ENCODE measurements at regions of chr17 and their contacts with region 1.

Region 1: GRCh38 chr17:76557368-76558197 is 17.7 kb downstream of the PRCD start:
- DNase-seq: peak; percentile 89 to 97
- H3K4me3 ChIP-seq: peak overlapping the region; percentile 89 to 100 (median 97)
- H3K27ac ChIP-seq: peak overlapping the region; percentile 93
- H3K4me1 ChIP-seq: peaks cover 2 to 10% (median 5%) of the 10 kb centered on the region in 4 experiments; a peak in 6 of 7 replicates
- H3K27me3 ChIP-seq: no peaks in the 10 kb centered on the region
- CTCF ChIP-seq: peak; percentile 63 to 81 (median 65)
- EP300 ChIP-seq: no peak
- POLR2A ChIP-seq: peak; percentile 86 to 95
- RAD21 ChIP-seq: peak; percentile 30 to 34; a peak in 3 of 4 replicates

Region 2: DNA sequence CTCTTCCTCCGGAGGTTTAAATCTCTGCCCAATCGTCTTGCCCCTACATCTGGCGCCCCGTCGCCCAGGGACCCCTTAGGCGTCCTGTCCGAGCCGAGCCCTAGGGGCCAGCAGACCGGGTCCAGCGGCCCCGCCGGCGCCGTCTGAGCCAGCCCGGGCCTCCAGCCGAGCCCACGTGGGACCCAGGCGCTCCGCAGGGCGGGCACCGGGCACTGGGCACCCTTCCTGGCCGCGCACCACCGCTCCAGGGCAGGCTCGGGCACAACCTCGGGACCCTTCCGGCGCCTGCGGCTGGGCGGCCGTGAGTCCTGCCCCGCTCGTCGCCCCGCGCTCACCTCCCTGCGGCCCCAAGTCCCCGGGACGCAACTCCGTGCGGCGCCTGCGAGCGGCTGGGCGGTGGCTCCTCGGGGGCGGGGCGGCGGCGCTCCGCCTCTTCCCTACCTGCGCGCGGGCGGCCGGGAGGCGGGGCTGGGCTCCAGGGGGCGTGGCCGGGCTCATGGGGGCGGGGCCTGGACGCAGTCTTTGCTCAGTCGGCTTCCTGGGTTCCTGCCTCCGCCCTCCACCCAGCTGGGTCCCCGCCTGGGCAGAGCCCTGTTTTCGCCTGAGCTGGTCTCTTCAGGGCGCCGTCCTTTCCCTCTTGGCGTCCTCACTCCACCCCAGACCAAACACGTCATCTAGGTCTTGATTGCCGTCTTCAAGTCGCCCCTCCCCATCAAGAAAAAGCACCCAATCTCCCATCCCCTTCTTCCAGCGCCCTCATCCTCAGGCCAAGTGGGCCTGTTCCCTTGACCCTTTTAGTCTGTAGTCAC is 56.4 kb before region 1 on chr17 and contains the start of gene RHBDF2:
- CTCF ChIA-PET with region 1: interaction called, 5 read pairs
- POLR2A ChIA-PET with region 1: interaction called, 15 read pairs
- DNase-seq: peak; percentile 65 to 100
- H3K4me3 ChIP-seq: peak within 1 kb of the TSS; percentile 62 to 82 (median 76)
- H3K27ac ChIP-seq: no peak within 1 kb of the TSS
- H3K4me1 ChIP-seq: peaks cover 11 to 43% (median 34%) of the 10 kb centered on the region in 4 experiments
- H3K27me3 ChIP-seq: no peaks in the 10 kb centered on the region
- CTCF ChIP-seq: no peak
- EP300 ChIP-seq: no peak
- POLR2A ChIP-seq: peak in 1 of 2 experiments; percentile 71; a peak in 2 of 3 replicates
- RAD21 ChIP-seq: no peak
- total RNA-seq, gene RHBDF2: 25.9 and 26.2 TPM in 2 replicates

Region 3: DNA sequence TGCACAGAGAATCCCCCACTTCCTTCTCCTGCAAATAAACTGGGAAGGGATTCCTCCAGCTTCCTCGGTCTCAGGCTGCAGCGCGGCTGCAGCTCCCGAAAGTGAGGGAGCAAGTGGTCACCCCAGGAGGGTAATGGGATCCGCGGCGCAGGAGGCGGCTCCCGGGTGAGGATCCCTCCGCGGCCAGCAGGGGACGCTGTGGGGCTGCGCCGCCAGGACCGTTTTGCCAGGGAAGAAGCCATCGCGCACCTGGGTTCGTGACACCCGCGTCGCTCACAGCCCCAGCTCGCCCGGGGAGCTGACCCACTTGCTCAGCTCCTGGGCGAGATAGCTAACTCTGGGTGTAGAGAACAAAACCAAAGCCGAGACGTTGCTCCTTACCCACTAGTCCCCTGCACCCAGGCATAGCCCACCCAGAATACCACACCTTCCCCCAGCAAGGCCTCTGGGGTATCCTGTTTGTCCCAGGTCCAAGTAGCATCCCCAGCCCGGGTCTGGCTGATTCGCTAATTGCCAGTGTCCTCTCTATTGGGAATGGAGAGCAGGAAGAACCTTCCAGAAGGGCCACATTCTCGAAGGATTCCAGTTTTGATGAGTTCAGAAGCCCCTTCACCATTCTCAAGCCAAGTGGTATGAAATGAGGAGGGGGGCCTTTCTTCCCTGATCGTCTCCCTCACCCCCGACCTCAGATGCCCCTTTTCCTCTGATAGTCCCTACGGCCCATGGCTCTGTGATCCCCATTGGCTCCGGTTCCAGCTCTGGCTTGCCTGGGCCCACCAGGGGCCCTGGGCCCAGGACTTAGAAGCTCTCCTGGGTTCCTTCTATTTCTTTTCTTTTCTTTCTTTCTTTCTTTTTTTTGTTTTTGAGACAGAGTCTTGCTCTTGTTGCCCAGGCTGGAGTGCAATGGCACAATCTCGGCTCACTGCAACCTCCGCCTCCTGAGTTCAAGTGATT is 34.2 kb before region 1 on chr17:
- CTCF ChIA-PET with region 1: interaction called, 46 read pairs
- POLR2A ChIA-PET with region 1: interaction called, 42 read pairs
- DNase-seq: peak; percentile 49 to 96
- H3K4me3 ChIP-seq: no peak overlapping the region
- H3K27ac ChIP-seq: no peak overlapping the region
- H3K4me1 ChIP-seq: peaks cover 0 to 19% (median 10%) of the 10 kb centered on the region in 4 experiments; a peak in 6 of 7 replicates
- H3K27me3 ChIP-seq: peaks cover 0 to 5% (median 0%) of the 10 kb centered on the region in 4 experiments; a peak in 3 of 7 replicates
- CTCF ChIP-seq: peak; percentile 97 to 99 (median 99)
- EP300 ChIP-seq: peak in 1 of 2 experiments; percentile 43; a peak in 1 of 3 replicates
- POLR2A ChIP-seq: no peak
- RAD21 ChIP-seq: peak; percentile 91 to 92

Region 4: DNA sequence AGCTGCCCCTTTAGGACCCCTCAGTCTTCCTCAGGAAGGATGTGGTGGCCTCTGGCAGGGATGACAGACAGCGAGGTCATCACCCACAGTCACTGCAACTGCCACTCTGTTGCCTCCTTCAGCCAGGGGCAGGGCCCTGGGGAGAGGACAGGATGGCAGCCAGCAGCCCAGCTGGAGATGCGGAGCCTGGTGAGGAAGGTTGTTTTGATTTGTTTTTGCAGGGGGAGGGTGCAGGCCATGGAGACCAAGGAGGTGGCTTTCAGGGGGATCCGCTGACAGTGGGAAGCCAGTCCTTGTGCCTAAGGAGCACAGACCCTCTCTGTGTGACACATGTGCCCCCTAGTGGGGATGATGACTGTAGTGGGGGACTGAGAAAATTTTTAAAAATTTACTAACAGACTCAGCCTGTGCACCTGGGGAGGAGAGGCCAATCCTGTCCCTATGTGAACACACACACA is 10.4 kb before region 1 on chr17:
- CTCF ChIA-PET with region 1: interaction called, 48 read pairs
- POLR2A ChIA-PET with region 1: interaction called, 38 read pairs
- DNase-seq: no peak
- H3K4me3 ChIP-seq: no peak overlapping the region
- H3K27ac ChIP-seq: no peak overlapping the region
- H3K4me1 ChIP-seq: peaks cover 4 to 30% (median 10%) of the 10 kb centered on the region in 4 experiments; a peak in 6 of 7 replicates
- H3K27me3 ChIP-seq: no peaks in the 10 kb centered on the region; a peak in 1 of 7 replicates
- CTCF ChIP-seq: peak; percentile 63 to 82 (median 65)
- EP300 ChIP-seq: no peak
- POLR2A ChIP-seq: no peak
- RAD21 ChIP-seq: peak; percentile 83 to 89

Region 5: DNA sequence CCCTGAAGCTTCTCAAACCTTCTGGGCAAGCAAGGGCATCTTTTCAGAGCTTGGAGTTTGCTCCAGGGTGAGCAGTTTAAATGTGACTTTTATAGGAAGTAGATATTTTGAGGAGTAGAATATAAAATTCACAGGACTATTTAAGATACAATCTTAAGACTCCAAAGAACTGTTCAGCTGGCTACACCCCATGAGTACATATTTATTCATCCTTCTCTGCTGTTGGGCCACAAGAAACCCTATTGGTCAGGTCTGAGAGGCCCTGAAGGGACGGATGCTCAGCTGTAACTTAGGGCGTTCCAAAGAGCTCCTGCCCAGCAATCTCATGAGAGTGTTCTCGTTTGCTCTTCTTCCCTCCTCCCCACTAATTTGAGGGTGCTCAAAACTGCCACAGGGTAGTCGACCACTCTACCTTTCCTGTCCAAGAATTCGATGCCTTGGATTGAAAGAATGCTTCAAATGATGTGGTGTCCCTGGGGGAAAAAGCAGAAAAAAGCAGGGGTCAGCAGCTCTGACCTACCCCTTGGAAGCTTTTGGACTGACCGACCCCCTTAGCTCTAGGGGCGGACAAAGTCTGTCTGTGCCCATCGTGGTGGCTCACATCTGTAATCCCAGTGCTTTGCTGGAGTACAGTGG is 20.9 kb after region 1 on chr17:
- CTCF ChIA-PET with region 1: interaction called, 71 read pairs
- POLR2A ChIA-PET with region 1: interaction called, 40 read pairs
- DNase-seq: no peak
- H3K4me3 ChIP-seq: no peak overlapping the region
- H3K27ac ChIP-seq: no peak overlapping the region
- H3K4me1 ChIP-seq: peaks cover 0 to 9% (median 4%) of the 10 kb centered on the region in 4 experiments; a peak in 5 of 7 replicates
- H3K27me3 ChIP-seq: peaks cover 0 to 31% (median 25%) of the 10 kb centered on the region in 4 experiments; a peak in 6 of 7 replicates
- CTCF ChIP-seq: no peak
- EP300 ChIP-seq: no peak
- POLR2A ChIP-seq: no peak
- RAD21 ChIP-seq: no peak

Region 6: DNA sequence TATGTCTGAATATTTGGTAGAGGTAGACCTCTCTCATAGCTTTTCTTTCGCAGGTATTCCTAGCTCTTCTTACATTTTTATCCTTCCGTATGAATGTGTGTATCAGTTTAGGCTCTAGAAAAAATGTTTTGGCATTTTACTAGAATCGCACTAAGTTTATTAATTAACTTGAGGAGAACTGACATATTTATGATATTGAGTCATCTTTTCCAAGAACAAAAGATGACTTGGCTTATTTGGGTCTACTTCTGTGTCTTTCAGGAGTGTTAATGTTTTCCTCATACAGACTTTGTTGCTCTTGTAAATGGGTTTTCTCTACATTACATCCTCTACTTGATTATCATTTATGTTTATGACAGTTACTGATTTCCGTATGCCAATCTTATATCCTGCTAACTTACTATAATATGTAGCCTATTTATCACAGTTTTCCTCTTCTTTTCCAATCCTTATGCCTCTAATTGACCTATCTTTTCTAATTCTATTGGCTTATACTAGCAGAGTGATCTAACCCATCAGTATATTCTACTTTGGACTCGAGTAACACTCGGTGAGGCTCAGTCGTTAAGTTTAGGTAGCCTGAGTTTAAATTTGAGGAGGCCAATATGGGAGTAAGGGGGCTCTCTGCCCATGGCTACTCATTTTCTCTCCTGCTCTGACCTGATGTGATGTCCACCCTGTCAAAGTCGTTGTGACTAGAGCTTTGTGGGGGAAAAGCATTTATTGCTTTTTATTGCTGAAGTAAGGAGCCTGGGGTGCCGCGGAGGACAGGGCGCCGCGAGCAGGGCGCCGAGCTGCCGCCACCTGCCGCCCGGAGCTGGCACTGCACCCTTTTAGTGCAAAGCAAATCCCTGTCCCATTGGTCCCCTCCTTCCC is 65.9 kb after region 1 on chr17:
- CTCF ChIA-PET with region 1: interaction called, 20 read pairs
- POLR2A ChIA-PET with region 1: interaction called, 3 read pairs
- DNase-seq: peak in 1 of 2 experiments; percentile 93
- H3K4me3 ChIP-seq: no peak overlapping the region
- H3K27ac ChIP-seq: no peak overlapping the region
- H3K4me1 ChIP-seq: no peaks in the 10 kb centered on the region
- H3K27me3 ChIP-seq: no peaks in the 10 kb centered on the region; a peak in 2 of 7 replicates
- CTCF ChIP-seq: peak; percentile 81 to 94 (median 85)
- EP300 ChIP-seq: no peak
- POLR2A ChIP-seq: no peak
- RAD21 ChIP-seq: peak; percentile 83 to 85

Region 7: DNA sequence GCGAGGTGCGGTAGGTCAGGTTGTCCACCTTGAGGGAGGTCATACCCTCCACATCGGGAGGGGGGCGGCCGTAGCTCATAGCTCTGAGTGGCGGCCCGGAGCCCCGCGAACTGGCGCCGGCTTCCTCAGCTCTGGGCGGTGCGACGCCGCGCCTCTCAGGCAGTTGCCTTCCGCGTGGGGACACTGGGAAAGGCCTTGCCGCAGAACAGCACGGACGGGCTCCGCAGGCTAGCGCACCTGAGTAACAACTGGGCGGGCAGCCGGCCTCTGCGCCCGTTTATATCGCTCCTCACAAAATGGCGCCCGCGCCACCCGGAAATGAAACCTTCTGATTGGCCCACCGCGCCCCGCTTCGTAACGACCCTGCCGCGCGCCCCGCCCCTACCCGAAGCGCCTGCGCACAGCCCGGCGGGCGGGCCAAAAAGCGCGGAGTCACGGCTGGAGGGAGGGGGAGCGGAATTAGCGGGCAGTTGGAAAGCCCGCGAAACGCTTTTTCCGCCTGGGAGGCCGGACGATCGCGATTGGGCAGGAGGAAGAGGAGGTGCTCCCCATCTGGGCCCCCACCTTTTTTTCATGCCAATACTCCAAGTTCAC is 179.6 kb after region 1 on chr17 and contains the start of gene SRSF2:
- CTCF ChIA-PET with region 1: no interaction called
- POLR2A ChIA-PET with region 1: interaction called, 14 read pairs
- DNase-seq: peak; percentile 95 to 98
- H3K4me3 ChIP-seq: peak within 1 kb of the TSS; percentile 88 to 100 (median 98)
- H3K27ac ChIP-seq: peak within 1 kb of the TSS; percentile 100
- H3K4me1 ChIP-seq: peaks cover 3 to 12% (median 7%) of the 10 kb centered on the region in 4 experiments; a peak in 6 of 7 replicates
- H3K27me3 ChIP-seq: no peaks in the 10 kb centered on the region
- CTCF ChIP-seq: no peak
- EP300 ChIP-seq: peak in 1 of 2 experiments; percentile 85; a peak in 2 of 3 replicates
- POLR2A ChIP-seq: peak; percentile 100
- RAD21 ChIP-seq: no peak
- total RNA-seq, gene SRSF2: 397 and 413 TPM in 2 replicates